ENCODE measurements at regions of chr5 and their contacts with region 1.

Region 1: GRCh38 chr5:126354012-126354857 is 69.0 kb upstream of the GRAMD2B start:
- DNase-seq: peak in 4 of 5 donors; percentile 48 to 51 (median 50)
- H3K4me3 ChIP-seq: no peak overlapping the region
- H3K4me3 Mint-ChIP-seq: peak overlapping the region in 6 of 8 donors; percentile 27 to 68 (median 64)
- H3K27ac ChIP-seq: no peak overlapping the region
- H3K27ac Mint-ChIP-seq: peak overlapping the region in 4 of 7 donors; percentile 7 to 65 (median 50)
- H3K4me1 ChIP-seq: peaks cover 4% of the 10 kb centered on the region
- H3K4me1 Mint-ChIP-seq: peaks cover 4 to 12% (median 5%) of the 10 kb centered on the region in 4 donors
- H3K27me3 ChIP-seq: no peaks in the 10 kb centered on the region
- H3K27me3 Mint-ChIP-seq: peaks cover 7 to 8% of the 10 kb centered on the region in 2 donors

Region 2: GRCh38 chr5:126300293-126300692 is 53.9 kb before region 1 on chr5:
- CTCF ChIA-PET with region 1: no interaction called
- POLR2A ChIA-PET with region 1: no interaction called
- intact Hi-C with region 1: no loop called
- DNase-seq: no peak
- H3K4me3 ChIP-seq: no peak overlapping the region
- H3K4me3 Mint-ChIP-seq: no peak overlapping the region
- H3K27ac ChIP-seq: no peak overlapping the region
- H3K27ac Mint-ChIP-seq: no peak overlapping the region
- H3K4me1 ChIP-seq: no peaks in the 10 kb centered on the region
- H3K4me1 Mint-ChIP-seq: no peaks in the 10 kb centered on the region
- H3K27me3 ChIP-seq: no peaks in the 10 kb centered on the region
- H3K27me3 Mint-ChIP-seq: peaks cover 6 to 9% of the 10 kb centered on the region in 2 donors

Region 3: GRCh38 chr5:126422989-126423788 is 69.0 kb after region 1 on chr5 and contains the start of gene GRAMD2B:
- CTCF ChIA-PET with region 1: interaction called, 4 read pairs
- POLR2A ChIA-PET with region 1: no interaction called
- intact Hi-C with region 1: loop called (anchors 2 kb)
- DNase-seq: peak; percentile 70 to 82 (median 75)
- H3K4me3 ChIP-seq: peak within 1 kb of the TSS; percentile 70 to 79
- H3K4me3 Mint-ChIP-seq: peak within 1 kb of the TSS; percentile 90 to 95 (median 92)
- H3K27ac ChIP-seq: peak within 1 kb of the TSS; percentile 87
- H3K27ac Mint-ChIP-seq: peak within 1 kb of the TSS; percentile 87 to 95 (median 94)
- H3K4me1 ChIP-seq: peaks cover 22% of the 10 kb centered on the region
- H3K4me1 Mint-ChIP-seq: peaks cover 20 to 40% (median 27%) of the 10 kb centered on the region in 4 donors
- H3K27me3 ChIP-seq: no peaks in the 10 kb centered on the region
- H3K27me3 Mint-ChIP-seq: no peaks in the 10 kb centered on the region
- total RNA-seq, gene GRAMD2B: 4.8 to 6.1 TPM

Region 4: GRCh38 chr5:126531543-126532120 is 177.4 kb after region 1 on chr5:
- CTCF ChIA-PET with region 1: interaction called, 53 read pairs
- POLR2A ChIA-PET with region 1: no interaction called
- intact Hi-C with region 1: no loop called
- DNase-seq: no peak
- H3K4me3 ChIP-seq: no peak overlapping the region
- H3K4me3 Mint-ChIP-seq: no peak overlapping the region
- H3K27ac ChIP-seq: no peak overlapping the region
- H3K27ac Mint-ChIP-seq: peak overlapping the region in 1 of 7 donors; percentile 63
- H3K4me1 ChIP-seq: no peaks in the 10 kb centered on the region
- H3K4me1 Mint-ChIP-seq: no peaks in the 10 kb centered on the region
- H3K27me3 ChIP-seq: no peaks in the 10 kb centered on the region
- H3K27me3 Mint-ChIP-seq: no peaks in the 10 kb centered on the region

Region 5: DNA sequence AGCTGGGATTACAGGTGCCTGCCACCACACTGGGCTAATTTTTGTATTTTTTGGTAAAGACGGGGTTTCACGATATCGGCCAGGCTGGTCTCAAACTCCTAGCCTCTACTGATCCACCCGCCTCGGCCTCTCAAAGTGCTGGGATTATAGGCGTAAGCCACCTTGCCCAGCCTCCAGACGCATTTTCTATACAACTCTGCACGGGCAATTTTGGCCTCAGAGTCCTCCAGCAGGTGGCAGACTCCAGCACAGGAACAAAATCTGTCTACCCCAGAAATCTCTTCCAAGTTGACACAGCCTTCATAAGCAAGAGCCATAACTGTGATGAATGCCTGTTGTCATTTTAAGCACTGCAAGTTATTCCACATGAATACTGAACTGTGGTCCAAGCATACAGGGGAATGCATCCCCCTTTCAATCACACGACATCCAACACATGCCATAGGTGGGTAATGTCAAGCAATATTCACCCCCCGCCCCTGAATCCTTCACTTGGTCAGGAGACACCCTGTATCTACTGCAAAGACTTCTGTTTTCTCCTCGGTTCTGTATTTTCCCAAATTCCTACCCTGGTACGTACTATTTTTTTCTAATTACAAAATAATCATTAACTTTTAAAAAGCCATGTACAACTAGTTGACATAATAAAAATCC is 190.0 kb after region 1 on chr5:
- CTCF ChIA-PET with region 1: interaction called, 114 read pairs
- POLR2A ChIA-PET with region 1: no interaction called
- intact Hi-C with region 1: no loop called
- DNase-seq: peak in 4 of 5 donors; percentile 7 to 22 (median 20)
- H3K4me3 ChIP-seq: no peak overlapping the region
- H3K4me3 Mint-ChIP-seq: no peak overlapping the region
- H3K27ac ChIP-seq: no peak overlapping the region
- H3K27ac Mint-ChIP-seq: no peak overlapping the region
- H3K4me1 ChIP-seq: no peaks in the 10 kb centered on the region
- H3K4me1 Mint-ChIP-seq: no peaks in the 10 kb centered on the region
- H3K27me3 ChIP-seq: no peaks in the 10 kb centered on the region
- H3K27me3 Mint-ChIP-seq: peaks cover 1 to 3% of the 10 kb centered on the region in 2 donors